Activated CD4-positive, alpha-beta memory T cell treated with anti-CD3 and anti-CD28 coated beads, Interleukin-2, amount 10 ng/mL, durations not matched to agents 7 days and 5 days (primary cell): ENCODE measurements at regions of chr17 and their contacts with region 1.

Region 1: DNA sequence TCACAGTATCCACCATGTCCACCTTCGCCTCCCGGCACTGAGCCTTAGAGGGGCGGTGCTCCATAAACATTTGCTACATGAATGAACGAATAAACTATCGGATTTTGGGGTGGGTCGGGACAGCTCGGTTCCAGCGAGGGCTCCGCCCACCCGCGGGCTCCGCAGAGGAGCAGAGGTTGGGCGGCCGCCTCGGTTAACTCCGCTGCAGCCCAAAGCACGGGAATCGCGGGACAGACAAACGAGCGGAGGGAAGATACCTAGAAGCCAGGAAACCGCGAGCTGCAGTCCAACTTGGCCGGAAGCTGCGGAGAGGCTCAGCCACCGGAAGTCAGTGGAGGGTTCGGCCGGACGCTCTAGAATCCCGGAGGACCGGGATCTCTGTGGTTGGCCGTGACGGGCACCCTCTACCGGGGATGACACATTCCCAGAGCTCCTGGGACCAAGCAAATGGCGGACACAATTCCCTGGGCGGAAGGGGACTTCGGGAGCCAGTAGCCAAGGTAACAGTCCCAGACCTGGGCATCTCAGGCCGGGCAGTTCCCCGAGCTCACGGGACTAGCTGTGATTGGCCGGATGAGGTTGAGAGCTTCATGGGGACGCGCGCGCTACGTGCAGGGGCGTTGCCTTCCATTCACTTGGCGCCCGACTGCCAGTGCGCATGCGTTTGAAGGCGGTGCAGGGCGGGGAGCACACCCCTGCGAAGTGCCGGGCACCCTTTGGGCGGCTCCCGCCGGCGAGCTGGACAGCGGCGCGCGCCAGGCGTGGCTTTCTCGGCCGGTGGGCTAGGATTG is 501 bp upstream of the MAPK7 start:
- DNase-seq: peak; percentile 98
- H3K4me3 Mint-ChIP-seq: peak overlapping the region; percentile 92
- H3K27ac Mint-ChIP-seq: peak overlapping the region; percentile 98
- H3K4me1 Mint-ChIP-seq: peaks cover 44% of the 10 kb centered on the region
- H3K27me3 Mint-ChIP-seq: no peaks in the 10 kb centered on the region

Region 2: GRCh38 chr17:19317359-19318095 is 60.3 kb before region 1 on chr17:
- CTCF ChIA-PET with region 1: no interaction called
- POLR2A ChIA-PET with region 1: no interaction called
- DNase-seq: no peak
- H3K4me3 Mint-ChIP-seq: no peak overlapping the region
- H3K27ac Mint-ChIP-seq: no peak overlapping the region
- H3K4me1 Mint-ChIP-seq: peaks cover 5% of the 10 kb centered on the region
- H3K27me3 Mint-ChIP-seq: no peaks in the 10 kb centered on the region

Region 3: DNA sequence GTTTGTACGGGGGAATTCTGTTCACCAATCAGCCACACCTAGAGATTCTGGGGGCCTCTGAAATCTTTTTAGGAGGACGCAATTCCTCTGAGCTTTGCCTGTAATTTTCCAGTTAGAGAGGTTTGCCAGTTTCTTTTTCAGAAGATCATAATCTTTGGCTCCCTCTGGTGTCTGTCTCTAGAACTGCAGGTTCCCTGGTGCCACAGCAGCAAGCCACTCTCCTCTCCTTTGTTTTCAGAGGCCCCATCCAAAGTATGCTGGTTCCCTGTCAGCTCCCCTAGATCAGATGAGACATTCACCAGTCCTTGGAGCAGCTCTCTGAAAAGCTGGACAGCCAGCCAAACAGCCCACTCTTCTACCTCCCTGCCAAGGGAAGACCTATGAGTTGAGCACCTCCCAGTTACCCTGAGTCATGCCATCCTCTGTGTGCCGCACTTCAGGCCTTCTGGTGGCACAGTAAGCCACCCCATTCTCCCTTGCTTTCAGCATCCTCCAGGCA is 69.3 kb after region 1 on chr17:
- CTCF ChIA-PET with region 1: interaction called, 19 read pairs
- POLR2A ChIA-PET with region 1: no interaction called
- DNase-seq: peak; percentile 66
- H3K4me3 Mint-ChIP-seq: no peak overlapping the region
- H3K27ac Mint-ChIP-seq: no peak overlapping the region
- H3K4me1 Mint-ChIP-seq: peaks cover 3% of the 10 kb centered on the region
- H3K27me3 Mint-ChIP-seq: peaks cover 33% of the 10 kb centered on the region

Region 4: DNA sequence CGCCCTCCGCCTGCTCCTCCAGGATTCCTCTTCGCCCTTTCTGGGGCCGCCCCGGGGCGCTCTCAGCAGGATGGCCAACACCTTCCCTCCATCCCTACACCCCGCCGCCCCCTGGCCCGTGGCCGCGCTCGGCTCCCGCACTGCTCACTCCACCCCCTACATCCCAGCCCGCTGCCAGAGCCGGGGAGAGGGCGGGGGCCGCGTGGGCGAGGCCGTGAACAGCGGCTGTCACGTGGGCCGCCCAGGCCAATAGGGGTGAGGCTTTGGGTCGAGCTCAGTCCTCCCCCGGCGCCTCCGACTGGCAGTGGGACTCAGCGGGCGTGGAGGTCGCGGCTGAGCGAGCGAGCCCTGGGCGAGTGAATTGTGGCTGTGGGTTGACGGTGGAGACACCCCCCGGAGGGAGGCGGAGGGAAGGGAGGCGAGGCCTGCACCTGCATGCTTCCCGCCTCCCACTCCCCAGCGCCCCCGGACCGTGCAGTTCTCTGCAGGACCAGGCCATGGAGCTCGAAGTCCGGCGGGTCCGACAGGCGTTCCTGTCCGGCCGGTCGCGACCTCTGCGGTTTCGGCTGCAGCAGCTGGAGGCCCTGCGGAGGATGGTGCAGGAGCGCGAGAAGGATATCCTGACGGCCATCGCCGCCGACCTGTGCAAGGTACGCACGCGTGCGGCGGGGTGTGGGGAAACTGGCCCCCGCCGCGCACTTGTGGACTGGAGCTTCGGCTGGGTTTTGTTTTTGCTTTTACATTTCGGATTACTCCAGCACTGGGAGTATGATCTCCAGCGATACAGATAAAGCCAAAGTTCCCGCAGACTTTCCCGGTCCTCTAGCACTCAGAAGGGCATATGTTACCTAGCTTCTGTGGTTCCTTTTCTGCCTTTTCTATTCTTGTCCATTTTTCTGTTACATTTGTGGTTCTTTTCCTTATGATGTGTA is 270.9 kb after region 1 on chr17 and contains the start of gene ALDH3A2:
- CTCF ChIA-PET with region 1: interaction called, 7 read pairs
- POLR2A ChIA-PET with region 1: interaction called, 12 read pairs
- DNase-seq: peak; percentile 93
- H3K4me3 Mint-ChIP-seq: peak within 1 kb of the TSS; percentile 87
- H3K27ac Mint-ChIP-seq: peak within 1 kb of the TSS; percentile 81
- H3K4me1 Mint-ChIP-seq: peaks cover 41% of the 10 kb centered on the region
- H3K27me3 Mint-ChIP-seq: peaks cover 10% of the 10 kb centered on the region
- total RNA-seq, gene ALDH3A2: 19.7 to 23.1 TPM